ENCODE measurements at regions of chr4 and their contacts with region 1.

Region 1: DNA sequence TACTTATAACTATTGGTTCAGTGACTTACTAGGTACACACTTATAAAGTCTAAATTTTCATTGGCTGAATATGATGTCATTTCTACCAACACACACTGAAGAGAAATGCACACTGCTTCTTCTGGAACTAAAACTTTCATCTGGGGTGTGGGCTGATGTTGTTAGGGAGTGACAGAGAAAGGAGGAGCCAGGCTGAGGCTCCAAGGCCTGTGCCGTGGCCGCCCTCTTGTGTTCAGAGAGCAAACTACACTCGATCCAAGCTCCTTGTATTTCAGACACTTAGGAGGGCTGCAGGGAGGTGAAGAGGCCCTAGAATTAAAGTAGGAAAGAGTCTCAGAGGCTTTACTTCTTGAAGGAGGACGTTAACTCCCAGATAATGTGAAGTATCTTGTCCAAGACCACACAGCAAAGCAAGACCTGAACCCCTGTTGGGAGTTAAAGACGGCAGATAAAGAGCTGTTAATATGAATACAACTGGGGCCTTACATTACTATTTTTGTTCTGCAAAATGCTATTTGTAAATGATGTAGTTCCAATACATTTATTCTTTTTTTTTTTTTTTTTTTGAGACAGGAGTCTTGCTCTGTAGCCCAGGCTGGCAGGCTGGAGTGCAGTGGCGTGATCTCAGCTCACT is 137.5 kb downstream of the AFAP1 start:
- DNase-seq: peak; percentile 79 to 89
- ATAC-seq: peak; percentile 79
- H3K4me3 ChIP-seq: no peak overlapping the region
- H3K27ac ChIP-seq: no peak overlapping the region
- H3K4me1 ChIP-seq: peaks cover 3 to 5% of the 10 kb centered on the region in 2 donors
- H3K27me3 ChIP-seq: no peaks in the 10 kb centered on the region

Region 2: GRCh38 chr4:7761720-7762119 is 40.5 kb before region 1 on chr4:
- intact Hi-C with region 1: loop called (anchors 2 to 5 kb)
- DNase-seq: peak; percentile 86 to 92
- ATAC-seq: peak; percentile 86
- H3K4me3 ChIP-seq: no peak overlapping the region
- H3K27ac ChIP-seq: no peak overlapping the region
- H3K4me1 ChIP-seq: no peaks in the 10 kb centered on the region
- H3K27me3 ChIP-seq: no peaks in the 10 kb centered on the region

Region 3: GRCh38 chr4:7843831-7844593 is 41.8 kb after region 1 on chr4:
- intact Hi-C with region 1: loop called (anchors 1 to 5 kb)
- DNase-seq: peak; percentile 78 to 91
- ATAC-seq: peak; percentile 46
- H3K4me3 ChIP-seq: no peak overlapping the region
- H3K27ac ChIP-seq: peak overlapping the region in 1 of 2 donors; percentile 28
- H3K4me1 ChIP-seq: peaks cover 0 to 3% of the 10 kb centered on the region in 2 donors
- H3K27me3 ChIP-seq: no peaks in the 10 kb centered on the region

Region 4: GRCh38 chr4:7973545-7973981 is 171.4 kb after region 1 on chr4:
- intact Hi-C with region 1: loop called in 1 of 2 experiments (anchors 5 kb)
- DNase-seq: peak in 1 of 2 donors; percentile 49
- ATAC-seq: no peak
- H3K4me3 ChIP-seq: no peak overlapping the region
- H3K27ac ChIP-seq: peak overlapping the region in 1 of 2 donors; percentile 16
- H3K4me1 ChIP-seq: peaks cover 0 to 2% of the 10 kb centered on the region in 2 donors
- H3K27me3 ChIP-seq: no peaks in the 10 kb centered on the region

Region 5: GRCh38 chr4:7987148-7987989 is 185.2 kb after region 1 on chr4:
- intact Hi-C with region 1: loop called (anchors 1 kb)
- DNase-seq: peak in 1 of 2 donors; percentile 77
- ATAC-seq: peak; percentile 81
- H3K4me3 ChIP-seq: no peak overlapping the region
- H3K27ac ChIP-seq: no peak overlapping the region
- H3K4me1 ChIP-seq: no peaks in the 10 kb centered on the region
- H3K27me3 ChIP-seq: no peaks in the 10 kb centered on the region

Measured in aorta (tissue), 5 donors.